Activated CD8-positive, alpha-beta T cell treated with anti-CD3 and anti-CD28 coated beads for 36 hours (primary cell): ENCODE measurements at regions of chr2 and their contacts with region 1.

Region 1: GRCh38 chr2:120109186-120110061 is 96.5 kb downstream of the EPB41L5 start:
- DNase-seq: no peak
- ATAC-seq: peak; percentile 68
- H3K4me3 Mint-ChIP-seq: no peak overlapping the region
- H3K27ac Mint-ChIP-seq: peak overlapping the region; percentile 87
- H3K4me1 Mint-ChIP-seq: peaks cover 19% of the 10 kb centered on the region
- H3K27me3 Mint-ChIP-seq: no peaks in the 10 kb centered on the region
- CTCF ChIP-seq: peak; percentile 54

Region 2: GRCh38 chr2:119759451-119760236 is 349.8 kb before region 1 on chr2 and contains the start of gene PTPN4:
- CTCF ChIA-PET with region 1: interaction called, 3 read pairs
- POLR2A ChIA-PET with region 1: no interaction called
- intact Hi-C with region 1: loop called (anchors 10 kb)
- DNase-seq: peak; percentile 97
- ATAC-seq: peak; percentile 94
- H3K4me3 Mint-ChIP-seq: peak within 1 kb of the TSS; percentile 81
- H3K27ac Mint-ChIP-seq: peak within 1 kb of the TSS; percentile 97
- H3K4me1 Mint-ChIP-seq: peaks cover 47% of the 10 kb centered on the region
- H3K27me3 Mint-ChIP-seq: no peaks in the 10 kb centered on the region
- CTCF ChIP-seq: no peak
- total RNA-seq, gene PTPN4: 34.4 to 40.2 TPM

Region 3: GRCh38 chr2:119921825-119922224 is 187.6 kb before region 1 on chr2:
- CTCF ChIA-PET with region 1: no interaction called
- POLR2A ChIA-PET with region 1: no interaction called
- intact Hi-C with region 1: no loop called
- DNase-seq: no peak
- ATAC-seq: no peak
- H3K4me3 Mint-ChIP-seq: no peak overlapping the region
- H3K27ac Mint-ChIP-seq: peak overlapping the region; percentile 49
- H3K4me1 Mint-ChIP-seq: peaks cover 26% of the 10 kb centered on the region
- H3K27me3 Mint-ChIP-seq: no peaks in the 10 kb centered on the region
- CTCF ChIP-seq: no peak